H1 (cell line): ENCODE measurements at regions of chr1 and their contacts with region 1.

Region 1: GRCh38 chr1:91165033-91165654 is 143.3 kb upstream of the ZNF644 start:
- DNase-seq: peak; percentile 68 to 97
- H3K4me3 ChIP-seq: no peak overlapping the region
- H3K27ac ChIP-seq: no peak overlapping the region
- H3K4me1 ChIP-seq: peaks cover 0 to 10% (median 3%) of the 10 kb centered on the region in 4 experiments; a peak in 4 of 7 replicates
- H3K27me3 ChIP-seq: peaks cover 0 to 4% (median 0%) of the 10 kb centered on the region in 4 experiments; a peak in 3 of 7 replicates
- CTCF ChIP-seq: peak; percentile 93 to 99 (median 99)
- EP300 ChIP-seq: no peak
- POLR2A ChIP-seq: no peak
- RAD21 ChIP-seq: peak; percentile 95 to 98

Region 2: DNA sequence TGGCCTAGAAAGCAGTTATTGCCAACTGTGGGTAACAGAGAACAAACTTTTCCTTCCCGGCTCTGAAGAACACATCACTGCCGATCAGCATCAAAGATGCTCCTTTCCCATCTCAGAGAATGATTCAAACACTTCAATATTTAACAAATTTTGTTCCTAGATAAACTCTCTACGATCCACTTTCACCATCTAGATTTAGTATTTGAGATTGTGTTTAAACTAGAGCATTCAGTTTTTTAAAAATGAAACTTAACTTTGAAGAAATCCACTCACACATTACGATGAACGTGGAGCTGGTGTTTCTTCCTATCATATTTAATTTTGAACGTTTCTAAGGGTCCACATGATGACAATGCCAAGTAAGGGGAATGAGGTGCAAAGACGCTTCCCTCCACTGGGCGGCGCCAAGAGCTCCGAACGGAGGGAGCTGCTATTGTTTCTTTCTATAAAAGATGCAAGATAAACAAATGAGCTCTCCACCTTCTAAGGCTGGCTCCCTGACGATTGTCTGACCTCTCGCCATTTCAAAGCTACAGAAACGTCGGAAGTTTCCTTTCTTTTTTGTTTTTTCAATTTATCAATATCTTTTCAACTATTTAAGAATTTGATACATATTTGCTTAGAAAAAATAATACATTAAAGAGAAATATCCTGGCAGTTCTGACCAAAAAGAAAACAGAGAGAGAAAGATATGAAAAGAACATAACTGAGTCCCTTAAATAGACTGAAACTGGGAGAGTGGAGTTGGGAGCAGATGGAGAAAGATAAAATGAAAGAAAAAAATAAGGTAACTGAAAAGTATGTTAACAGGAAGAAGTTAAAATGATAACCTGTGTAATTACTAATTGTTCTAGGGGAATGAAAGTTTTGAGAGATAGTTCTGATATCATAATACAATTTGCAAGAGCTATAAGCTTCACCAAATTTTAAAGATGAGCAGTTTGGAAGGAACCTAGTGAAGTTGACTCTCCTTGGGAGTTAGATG is 443.6 kb before region 1 on chr1:
- CTCF ChIA-PET with region 1: interaction called, 42 read pairs
- POLR2A ChIA-PET with region 1: no interaction called
- DNase-seq: peak in 1 of 2 experiments; percentile 82
- H3K4me3 ChIP-seq: no peak overlapping the region
- H3K27ac ChIP-seq: no peak overlapping the region
- H3K4me1 ChIP-seq: peaks cover 23 to 44% (median 33%) of the 10 kb centered on the region in 4 experiments
- H3K27me3 ChIP-seq: peaks cover 89 to 99% (median 96%) of the 10 kb centered on the region in 4 experiments
- CTCF ChIP-seq: peak; percentile 74 to 88 (median 83)
- EP300 ChIP-seq: no peak
- POLR2A ChIP-seq: no peak
- RAD21 ChIP-seq: peak; percentile 79 to 82

Region 3: GRCh38 chr1:91015794-91016550 is 149.2 kb before region 1 on chr1:
- CTCF ChIA-PET with region 1: interaction called, 22 read pairs
- POLR2A ChIA-PET with region 1: interaction called, 16 read pairs
- DNase-seq: no peak
- H3K4me3 ChIP-seq: peak overlapping the region in 1 of 4 experiments; percentile 18; a peak in 1 of 8 replicates
- H3K27ac ChIP-seq: 0 out of 2 replicates have a peak overlapping the region, but pooled peaks have one; percentile 45
- H3K4me1 ChIP-seq: peaks cover 0 to 22% (median 6%) of the 10 kb centered on the region in 4 experiments; a peak in 4 of 7 replicates
- H3K27me3 ChIP-seq: no peaks in the 10 kb centered on the region
- CTCF ChIP-seq: no peak
- EP300 ChIP-seq: no peak
- POLR2A ChIP-seq: no peak; a peak in 1 of 3 replicates
- RAD21 ChIP-seq: no peak

Region 4: GRCh38 chr1:91036894-91037829 is 128.0 kb before region 1 on chr1:
- CTCF ChIA-PET with region 1: no interaction called
- POLR2A ChIA-PET with region 1: no interaction called
- DNase-seq: no peak
- H3K4me3 ChIP-seq: no peak overlapping the region
- H3K27ac ChIP-seq: no peak overlapping the region
- H3K4me1 ChIP-seq: no peaks in the 10 kb centered on the region
- H3K27me3 ChIP-seq: peaks cover 0 to 12% (median 9%) of the 10 kb centered on the region in 4 experiments; a peak in 5 of 7 replicates
- CTCF ChIP-seq: no peak
- EP300 ChIP-seq: no peak
- POLR2A ChIP-seq: no peak
- RAD21 ChIP-seq: no peak

Region 5: DNA sequence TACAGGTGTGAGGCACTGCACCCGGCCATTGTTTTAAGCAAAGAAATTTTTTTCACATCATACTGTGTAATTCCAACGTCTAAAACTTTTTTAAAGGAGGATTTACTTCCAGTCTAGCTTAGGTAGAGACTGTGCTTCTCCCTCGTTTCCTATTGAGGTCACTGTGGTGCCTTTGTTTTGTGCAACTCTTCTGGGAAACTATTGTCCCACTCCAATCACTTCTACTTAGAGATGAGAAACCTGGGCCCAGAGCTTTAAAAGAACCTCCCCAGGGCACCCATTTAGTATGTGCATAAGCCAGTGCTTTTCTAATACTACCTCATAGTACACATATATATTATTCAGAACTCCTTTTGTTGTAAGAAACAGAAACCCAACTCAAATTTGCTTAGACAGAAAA is 23.3 kb before region 1 on chr1:
- CTCF ChIA-PET with region 1: interaction called, 37 read pairs
- POLR2A ChIA-PET with region 1: no interaction called
- DNase-seq: no peak
- H3K4me3 ChIP-seq: no peak overlapping the region
- H3K27ac ChIP-seq: no peak overlapping the region
- H3K4me1 ChIP-seq: peaks cover 0 to 20% (median 9%) of the 10 kb centered on the region in 4 experiments; a peak in 5 of 7 replicates
- H3K27me3 ChIP-seq: no peaks in the 10 kb centered on the region
- CTCF ChIP-seq: peak in 2 of 3 experiments; percentile 23 to 25; a peak in 2 of 4 replicates
- EP300 ChIP-seq: no peak
- POLR2A ChIP-seq: no peak
- RAD21 ChIP-seq: peak; percentile 42 to 56

Region 6: DNA sequence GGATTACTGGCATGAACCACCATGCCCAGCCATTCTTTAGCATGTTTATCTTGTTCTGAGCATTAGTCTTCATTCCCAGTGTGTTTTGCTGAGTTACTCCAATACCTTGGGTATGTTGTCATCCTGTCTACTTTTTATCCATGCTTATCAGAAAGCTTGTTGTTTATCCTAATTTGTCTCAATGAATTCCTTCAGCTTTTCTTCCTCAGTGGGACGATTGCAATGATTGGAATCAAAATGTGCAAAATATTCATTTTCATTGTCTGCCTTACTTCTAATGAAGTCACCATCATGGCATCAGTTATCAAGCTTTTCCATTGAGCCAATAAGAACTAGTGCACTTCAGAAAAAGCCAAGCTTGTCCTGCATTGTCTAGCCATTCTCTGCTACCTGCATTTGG is 69.0 kb after region 1 on chr1:
- CTCF ChIA-PET with region 1: interaction called, 16 read pairs
- POLR2A ChIA-PET with region 1: no interaction called
- DNase-seq: no peak
- H3K4me3 ChIP-seq: no peak overlapping the region
- H3K27ac ChIP-seq: no peak overlapping the region
- H3K4me1 ChIP-seq: no peaks in the 10 kb centered on the region
- H3K27me3 ChIP-seq: no peaks in the 10 kb centered on the region
- CTCF ChIP-seq: no peak
- EP300 ChIP-seq: no peak
- POLR2A ChIP-seq: no peak
- RAD21 ChIP-seq: no peak

Region 7: DNA sequence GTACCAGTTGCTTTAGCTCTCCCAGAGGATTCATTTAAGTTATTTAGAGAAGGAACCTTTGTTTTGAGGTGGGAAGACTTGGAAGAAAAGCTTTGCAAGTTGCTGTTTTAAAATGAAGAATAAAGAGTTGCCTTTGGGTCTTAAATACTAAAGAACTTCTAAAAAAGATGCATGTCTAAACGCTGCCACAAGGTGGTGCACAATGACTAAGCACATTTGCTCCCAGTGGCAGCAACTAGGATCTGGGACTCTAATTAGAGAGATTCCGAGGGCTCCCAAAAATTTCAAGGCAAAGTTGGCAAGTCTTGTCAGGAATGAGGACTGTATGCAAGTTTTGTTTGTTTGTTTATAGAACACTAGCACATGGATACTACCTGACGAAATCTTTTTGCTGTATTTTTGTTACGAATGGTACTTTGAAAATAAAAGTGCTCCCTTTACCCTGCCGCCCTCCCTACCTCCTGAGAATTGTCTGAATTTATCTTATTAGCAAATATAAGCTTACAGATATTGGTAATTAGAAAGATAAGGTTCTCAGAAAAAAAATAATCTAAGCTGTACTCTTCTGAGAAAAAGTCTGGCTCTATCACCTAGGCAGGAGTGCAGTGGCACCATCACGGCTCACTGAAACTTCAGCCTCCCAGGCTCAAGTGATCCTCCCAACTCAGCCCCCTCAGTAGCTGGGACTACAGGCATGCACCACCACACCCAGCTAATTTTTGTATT is 117.7 kb after region 1 on chr1:
- CTCF ChIA-PET with region 1: interaction called, 230 read pairs
- POLR2A ChIA-PET with region 1: interaction called, 7 read pairs
- DNase-seq: peak; percentile 49 to 59
- H3K4me3 ChIP-seq: no peak overlapping the region
- H3K27ac ChIP-seq: no peak overlapping the region
- H3K4me1 ChIP-seq: no peaks in the 10 kb centered on the region
- H3K27me3 ChIP-seq: no peaks in the 10 kb centered on the region
- CTCF ChIP-seq: peak in 2 of 3 experiments; percentile 78 to 92; a peak in 3 of 4 replicates
- EP300 ChIP-seq: 0 out of 3 replicates have a peak, but pooled peaks of 1 of the 2 experiments have one; percentile 5
- POLR2A ChIP-seq: no peak
- RAD21 ChIP-seq: peak; percentile 93 to 94

Region 8: DNA sequence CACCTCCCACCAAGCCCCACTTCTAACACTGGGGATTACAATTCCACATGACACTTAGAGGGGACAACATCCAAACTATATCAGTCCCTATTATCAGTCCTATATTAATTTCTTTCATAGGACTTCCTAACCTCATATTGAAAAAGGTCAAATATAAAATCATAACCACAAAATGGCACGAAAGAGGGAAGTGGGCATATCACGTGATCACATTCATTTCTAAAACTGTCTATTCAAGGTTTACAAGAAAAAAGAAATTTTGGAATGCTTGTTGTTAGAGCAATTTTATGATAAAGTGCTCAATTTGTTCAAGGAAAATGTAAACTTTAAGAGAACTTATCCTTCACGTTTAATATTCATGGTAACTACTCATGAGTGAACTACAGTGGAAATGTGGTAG is 322.3 kb after region 1 on chr1:
- CTCF ChIA-PET with region 1: no interaction called
- POLR2A ChIA-PET with region 1: no interaction called
- DNase-seq: no peak
- H3K4me3 ChIP-seq: no peak overlapping the region
- H3K27ac ChIP-seq: no peak overlapping the region
- H3K4me1 ChIP-seq: no peaks in the 10 kb centered on the region
- H3K27me3 ChIP-seq: no peaks in the 10 kb centered on the region
- CTCF ChIP-seq: no peak
- EP300 ChIP-seq: no peak
- POLR2A ChIP-seq: no peak
- RAD21 ChIP-seq: no peak